H1 (cell line): ENCODE measurements at regions of chr16 and their contacts with region 1.

Region 1: GRCh38 chr16:81901483-81901882 is 109.8 kb downstream of the SDR42E1 start:
- DNase-seq: no peak
- H3K4me3 ChIP-seq: no peak overlapping the region
- H3K27ac ChIP-seq: no peak overlapping the region
- H3K4me1 ChIP-seq: no peaks in the 10 kb centered on the region
- H3K27me3 ChIP-seq: no peaks in the 10 kb centered on the region
- CTCF ChIP-seq: no peak
- EP300 ChIP-seq: no peak
- POLR2A ChIP-seq: no peak
- RAD21 ChIP-seq: no peak

Region 2: DNA sequence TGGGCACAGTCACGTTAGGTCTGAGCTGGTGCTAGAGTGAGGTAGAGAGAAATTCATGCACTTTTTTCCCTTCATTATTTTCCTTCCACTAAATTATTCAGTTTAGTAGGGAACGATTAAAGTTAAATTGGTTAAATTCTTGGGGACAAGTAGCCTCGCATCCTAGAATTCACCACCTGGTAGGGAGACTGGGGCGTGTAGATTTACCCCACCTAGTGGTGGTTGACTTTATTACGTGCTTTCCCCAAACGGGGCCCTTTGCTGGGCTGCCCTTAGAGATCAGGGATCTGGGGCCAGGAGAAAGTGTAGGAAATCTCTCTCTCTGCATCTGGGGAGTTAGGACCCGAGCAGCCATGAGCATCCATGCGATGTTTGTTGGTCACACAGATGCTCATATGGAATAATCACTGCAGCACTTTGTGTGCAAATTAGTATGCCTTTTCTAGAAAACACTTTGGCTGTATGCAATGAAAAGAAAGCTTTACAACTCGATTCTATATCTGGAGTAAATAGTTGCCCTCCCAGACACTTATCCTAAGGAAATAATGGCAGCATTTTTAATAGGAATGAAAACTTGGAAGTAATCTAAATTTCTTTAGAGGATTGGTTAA is 15.4 kb before region 1 on chr16:
- CTCF ChIA-PET with region 1: interaction called, 138 read pairs
- POLR2A ChIA-PET with region 1: no interaction called
- DNase-seq: peak; percentile 36 to 77
- H3K4me3 ChIP-seq: no peak overlapping the region
- H3K27ac ChIP-seq: no peak overlapping the region
- H3K4me1 ChIP-seq: peaks cover 0 to 3% (median 1%) of the 10 kb centered on the region in 4 experiments; a peak in 1 of 7 replicates
- H3K27me3 ChIP-seq: no peaks in the 10 kb centered on the region
- CTCF ChIP-seq: peak; percentile 58 to 77 (median 75)
- EP300 ChIP-seq: no peak
- POLR2A ChIP-seq: no peak
- RAD21 ChIP-seq: peak; percentile 60 to 71